ENCODE measurements at regions of chr9 and their contacts with region 1.

Region 1: GRCh38 chr9:88578121-88579054 is 43.4 kb downstream of the NXNL2 start:
- DNase-seq: peak; percentile 76
- H3K4me3 ChIP-seq: peak overlapping the region; percentile 32
- H3K27ac ChIP-seq: no peak overlapping the region
- H3K4me1 ChIP-seq: peaks cover 34% of the 10 kb centered on the region
- H3K27me3 ChIP-seq: no peaks in the 10 kb centered on the region
- CTCF ChIP-seq: peak; percentile 98

Region 2: DNA sequence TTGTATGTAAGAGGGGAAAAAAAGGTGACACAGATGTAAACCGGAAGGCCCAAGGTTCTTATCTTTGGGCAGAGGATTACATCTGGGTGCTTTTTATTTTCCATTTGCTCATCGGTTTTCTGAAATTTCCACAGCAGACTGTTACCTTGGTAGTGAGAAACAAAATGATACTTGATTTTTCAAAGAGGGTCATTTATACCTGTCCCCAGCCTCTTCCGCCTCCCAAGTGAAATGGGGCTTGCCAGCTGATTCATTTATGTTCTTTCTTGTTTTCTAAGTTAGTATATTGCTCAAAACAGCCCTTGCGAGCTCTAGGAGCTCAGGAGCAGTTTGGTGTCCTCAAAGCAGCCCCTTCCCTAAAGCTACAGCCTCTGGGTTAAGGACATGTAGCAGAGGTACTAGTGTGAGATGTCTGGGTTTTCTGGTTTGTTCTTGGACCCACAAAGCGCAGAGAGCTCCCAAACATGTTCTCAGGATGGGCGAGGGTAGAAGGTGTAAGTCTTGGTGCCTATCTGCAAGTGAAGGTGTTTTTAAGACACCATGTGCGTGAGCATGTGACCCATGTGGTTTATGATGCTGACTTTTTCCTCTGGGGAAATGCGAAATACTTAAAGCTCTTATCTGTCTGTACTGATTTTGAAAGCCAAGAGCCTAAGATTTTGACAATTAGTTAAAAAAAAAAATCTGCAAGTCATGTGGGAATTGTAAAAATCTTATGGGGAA is 1042.4 kb before region 1 on chr9:
- CTCF ChIA-PET with region 1: no interaction called
- POLR2A ChIA-PET with region 1: no interaction called
- intact Hi-C with region 1: no loop called
- DNase-seq: no peak
- H3K4me3 ChIP-seq: no peak overlapping the region
- H3K27ac ChIP-seq: peak overlapping the region; percentile 14
- H3K4me1 ChIP-seq: peaks cover 75% of the 10 kb centered on the region
- H3K27me3 ChIP-seq: no peaks in the 10 kb centered on the region
- CTCF ChIP-seq: no peak

Region 3: DNA sequence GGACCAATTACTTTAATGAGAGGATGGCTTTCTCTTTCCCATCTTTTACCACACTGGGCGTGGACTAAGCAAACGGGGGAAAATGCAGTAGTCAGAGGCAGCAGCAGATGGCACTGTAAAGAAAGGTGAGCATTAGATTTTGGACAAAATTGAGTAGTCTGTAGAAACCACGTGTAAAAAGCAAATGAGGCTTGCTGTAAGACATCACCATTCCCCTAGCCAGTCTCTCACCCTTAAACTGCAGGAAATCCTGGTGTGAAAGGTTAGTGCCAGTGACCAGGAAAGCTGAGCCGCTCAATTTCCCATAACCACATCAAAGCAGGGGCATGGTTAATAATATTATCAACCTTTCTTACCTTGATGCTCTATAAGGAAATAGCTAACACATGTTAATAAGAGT is 471.9 kb before region 1 on chr9:
- CTCF ChIA-PET with region 1: no interaction called
- POLR2A ChIA-PET with region 1: no interaction called
- intact Hi-C with region 1: loop called (anchors 10 kb)
- DNase-seq: peak; percentile 74
- H3K4me3 ChIP-seq: no peak overlapping the region
- H3K27ac ChIP-seq: no peak overlapping the region
- H3K4me1 ChIP-seq: no peaks in the 10 kb centered on the region
- H3K27me3 ChIP-seq: no peaks in the 10 kb centered on the region
- CTCF ChIP-seq: peak; percentile 72

Region 4: DNA sequence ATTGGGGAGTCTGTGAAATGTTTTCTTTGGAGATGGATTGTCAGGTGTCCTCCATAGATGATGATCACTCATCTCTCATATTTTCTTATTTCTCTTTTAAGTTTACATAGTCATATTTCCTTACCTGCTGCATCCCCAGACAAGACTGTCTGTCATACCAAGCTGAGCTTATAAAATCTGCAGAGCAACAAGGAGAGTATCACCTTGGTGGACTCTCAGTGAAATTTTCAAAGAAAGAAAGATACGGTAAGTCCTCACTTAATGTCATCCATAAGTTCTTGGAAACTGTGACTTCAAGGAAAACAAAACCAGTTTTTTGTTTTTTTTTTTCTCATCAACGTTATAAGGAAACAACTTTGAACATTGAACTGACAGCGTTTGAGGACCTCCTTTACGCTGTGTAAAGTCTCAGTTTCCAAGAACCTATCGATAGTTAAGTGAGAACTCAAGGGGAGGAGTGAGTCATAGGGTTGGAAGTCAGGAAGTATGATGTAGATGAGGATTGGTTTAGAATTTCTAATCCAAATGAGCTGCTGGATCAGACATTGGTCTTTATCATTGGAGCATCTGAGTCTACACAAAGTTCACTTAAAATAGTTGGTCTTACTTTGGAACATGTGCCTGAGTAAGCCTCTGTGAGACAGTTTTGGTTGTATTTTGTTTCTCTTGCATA is 144.7 kb before region 1 on chr9:
- CTCF ChIA-PET with region 1: no interaction called
- POLR2A ChIA-PET with region 1: no interaction called
- intact Hi-C with region 1: no loop called
- DNase-seq: peak; percentile 49
- H3K4me3 ChIP-seq: no peak overlapping the region
- H3K27ac ChIP-seq: no peak overlapping the region
- H3K4me1 ChIP-seq: peaks cover 2% of the 10 kb centered on the region
- H3K27me3 ChIP-seq: no peaks in the 10 kb centered on the region
- CTCF ChIP-seq: no peak

Region 5: DNA sequence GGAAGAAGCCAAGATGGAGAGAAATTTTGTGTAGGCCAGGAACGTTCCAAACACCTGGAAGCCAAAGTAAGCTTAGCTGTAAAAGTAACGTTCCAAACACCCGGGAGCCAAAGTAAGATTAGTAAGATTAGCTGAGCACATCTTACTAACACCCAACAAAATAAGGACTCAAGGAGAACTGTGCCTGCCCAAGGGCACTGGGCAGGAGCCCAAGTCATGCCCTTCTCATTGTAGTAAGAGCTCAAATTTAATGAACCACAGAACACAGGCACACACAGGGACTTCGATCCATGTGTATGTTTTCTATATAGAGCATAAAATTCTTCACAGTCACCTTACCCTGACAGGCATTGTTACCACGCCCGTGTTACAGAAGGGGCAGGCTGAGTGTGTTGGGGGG is 79.5 kb before region 1 on chr9:
- CTCF ChIA-PET with region 1: no interaction called
- POLR2A ChIA-PET with region 1: no interaction called
- intact Hi-C with region 1: loop called (anchors 10 kb)
- DNase-seq: no peak
- H3K4me3 ChIP-seq: no peak overlapping the region
- H3K27ac ChIP-seq: no peak overlapping the region
- H3K4me1 ChIP-seq: peaks cover 6% of the 10 kb centered on the region
- H3K27me3 ChIP-seq: no peaks in the 10 kb centered on the region
- CTCF ChIP-seq: no peak

Measured in A673 (cell line).